GM12878 (cell line): ENCODE measurements at regions of chr9 and their contacts with region 1.

Region 1: DNA sequence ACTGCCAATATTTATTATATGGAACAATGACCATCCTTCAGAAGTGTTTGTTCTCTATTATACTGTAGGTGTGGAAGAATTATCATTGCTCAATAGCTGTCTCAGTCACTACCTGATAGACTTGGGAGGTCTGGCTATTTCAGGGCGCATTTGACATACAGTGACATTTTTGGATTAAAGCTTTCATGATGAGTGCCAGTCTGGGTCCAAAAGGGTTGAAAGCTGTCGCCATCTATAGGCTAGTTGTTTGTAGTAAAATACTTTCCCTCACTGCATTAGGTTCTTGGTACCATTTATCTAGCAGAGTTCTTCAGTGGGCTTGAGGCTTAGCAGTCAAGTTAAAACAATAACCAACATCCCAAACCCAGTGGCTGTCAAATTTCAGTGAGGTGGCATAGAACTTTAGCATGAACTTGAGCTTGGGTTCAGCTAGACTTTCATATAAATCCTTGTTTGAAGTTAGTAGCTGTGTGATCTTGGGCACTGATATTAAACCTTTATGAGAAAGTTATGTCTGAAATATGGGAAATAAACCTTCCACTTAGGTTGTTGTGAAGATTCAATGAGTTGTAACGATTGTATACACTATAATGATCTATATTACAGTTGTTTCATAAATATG is 110.5 kb upstream of the CDKN2B start:
- DNase-seq: no peak
- ATAC-seq: peak; percentile 76
- H3K4me3 ChIP-seq: no peak overlapping the region
- H3K27ac ChIP-seq: no peak overlapping the region
- H3K4me1 ChIP-seq: no peaks in the 10 kb centered on the region
- H3K27me3 ChIP-seq: peaks cover 0 to 8% of the 10 kb centered on the region in 2 experiments; a peak in 2 of 4 replicates
- CTCF ChIP-seq: peak; percentile 39 to 58 (median 55); a peak in 5 of 6 replicates
- EP300 ChIP-seq: no peak
- POLR2A ChIP-seq: no peak
- RAD21 ChIP-seq: peak; percentile 68

Region 2: GRCh38 chr9:21840647-21841046 is 279.0 kb before region 1 on chr9:
- CTCF ChIA-PET with region 1: no interaction called
- POLR2A ChIA-PET with region 1: no interaction called
- RAD21 ChIA-PET with region 1: no interaction called
- SMC1A ChIA-PET with region 1: no interaction called
- in situ Hi-C with region 1: no loop called
- intact Hi-C with region 1: no loop called
- DNase-seq: no peak
- ATAC-seq: no peak
- H3K4me3 ChIP-seq: no peak overlapping the region
- H3K27ac ChIP-seq: no peak overlapping the region
- H3K4me1 ChIP-seq: no peaks in the 10 kb centered on the region
- H3K27me3 ChIP-seq: no peaks in the 10 kb centered on the region
- CTCF ChIP-seq: no peak
- EP300 ChIP-seq: no peak
- POLR2A ChIP-seq: no peak
- RAD21 ChIP-seq: no peak

Region 3: GRCh38 chr9:22037954-22038690 is 81.5 kb before region 1 on chr9:
- CTCF ChIA-PET with region 1: interaction called, 13 read pairs
- POLR2A ChIA-PET with region 1: no interaction called
- RAD21 ChIA-PET with region 1: interaction called, 4 read pairs
- SMC1A ChIA-PET with region 1: interaction called, 7 read pairs
- in situ Hi-C with region 1: no loop called
- intact Hi-C with region 1: no loop called
- DNase-seq: no peak
- ATAC-seq: peak; percentile 53; the same call in 2 of the 3 replicates
- H3K4me3 ChIP-seq: no peak overlapping the region
- H3K27ac ChIP-seq: no peak overlapping the region
- H3K4me1 ChIP-seq: no peaks in the 10 kb centered on the region
- H3K27me3 ChIP-seq: no peaks in the 10 kb centered on the region; a peak in 1 of 4 replicates
- CTCF ChIP-seq: peak; percentile 30 to 48 (median 34); a peak in 4 of 6 replicates
- EP300 ChIP-seq: no peak
- POLR2A ChIP-seq: no peak
- RAD21 ChIP-seq: peak; percentile 76

Region 4: DNA sequence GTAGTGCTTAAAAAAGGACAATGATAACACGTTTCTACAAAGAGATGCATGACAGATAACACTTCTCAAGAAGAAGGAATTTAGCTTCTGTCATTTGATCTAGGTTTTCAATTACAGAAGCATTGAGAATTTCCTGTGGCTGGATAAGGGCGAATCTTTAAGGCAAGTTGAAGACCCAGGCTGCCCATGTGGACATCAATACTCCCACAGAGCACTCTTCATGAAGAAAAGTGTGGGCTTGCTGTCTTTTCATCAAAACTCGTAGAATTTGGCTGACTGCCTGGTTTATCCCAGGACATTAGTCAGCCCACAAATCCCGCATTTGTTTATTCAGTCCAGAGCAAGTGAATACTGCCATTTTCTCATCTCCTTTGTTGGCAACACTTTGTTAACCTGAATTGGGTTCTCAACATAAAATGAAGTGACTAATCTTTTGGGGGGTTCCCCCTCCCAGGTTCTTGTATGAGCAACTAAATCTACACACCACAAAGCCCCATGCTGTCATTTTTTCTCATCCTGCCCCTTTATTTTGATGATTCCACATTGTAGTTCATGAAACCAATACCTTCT is 67.2 kb before region 1 on chr9:
- CTCF ChIA-PET with region 1: interaction called, 8 read pairs
- POLR2A ChIA-PET with region 1: no interaction called
- RAD21 ChIA-PET with region 1: interaction called, 5 read pairs
- SMC1A ChIA-PET with region 1: interaction called, 10 read pairs
- in situ Hi-C with region 1: no loop called
- intact Hi-C with region 1: no loop called
- DNase-seq: no peak
- ATAC-seq: peak; percentile 42
- H3K4me3 ChIP-seq: no peak overlapping the region
- H3K27ac ChIP-seq: no peak overlapping the region
- H3K4me1 ChIP-seq: no peaks in the 10 kb centered on the region
- H3K27me3 ChIP-seq: no peaks in the 10 kb centered on the region
- CTCF ChIP-seq: no peak
- EP300 ChIP-seq: no peak
- POLR2A ChIP-seq: no peak
- RAD21 ChIP-seq: no peak

Region 5: DNA sequence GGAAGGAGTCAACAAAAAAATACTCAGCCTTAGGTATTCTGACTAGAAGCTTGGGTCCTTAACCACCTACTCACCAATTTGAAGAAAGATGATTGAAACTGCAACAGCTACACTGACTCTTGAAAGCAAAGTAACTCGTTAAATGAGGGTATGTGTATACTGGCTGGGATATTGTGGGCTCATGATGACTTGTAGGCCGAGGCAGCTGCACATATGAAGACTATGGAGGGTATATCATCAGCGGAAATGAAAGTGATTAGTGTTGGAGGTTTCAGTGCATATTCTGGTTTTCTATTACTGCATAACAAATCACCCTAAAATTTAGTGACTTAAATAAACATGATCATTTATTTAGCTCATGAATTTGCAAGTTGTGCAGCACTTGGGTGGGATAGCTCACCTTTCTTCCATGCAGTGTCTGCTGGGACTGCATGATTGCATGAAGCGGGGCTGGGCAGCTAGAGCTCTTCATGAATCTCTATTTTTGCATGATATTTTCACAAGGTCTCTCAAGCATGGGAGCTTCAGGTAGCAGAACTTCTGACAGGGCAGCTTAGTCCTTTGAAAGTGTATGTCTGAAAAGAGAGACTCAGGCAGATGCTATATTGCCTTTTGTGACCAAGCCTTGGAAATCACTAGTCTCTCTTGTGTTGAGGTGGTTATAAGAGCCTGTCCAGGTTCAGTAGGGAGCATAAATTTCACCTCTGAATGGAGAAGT is 14.5 kb before region 1 on chr9:
- CTCF ChIA-PET with region 1: interaction called, 25 read pairs
- POLR2A ChIA-PET with region 1: no interaction called
- RAD21 ChIA-PET with region 1: interaction called, 3 read pairs
- SMC1A ChIA-PET with region 1: interaction called, 3 read pairs
- in situ Hi-C with region 1: no loop called
- intact Hi-C with region 1: no loop called
- DNase-seq: peak; percentile 40
- ATAC-seq: peak; percentile 93
- H3K4me3 ChIP-seq: no peak overlapping the region
- H3K27ac ChIP-seq: no peak overlapping the region
- H3K4me1 ChIP-seq: peaks cover 9% of the 10 kb centered on the region
- H3K27me3 ChIP-seq: peaks cover 0 to 8% of the 10 kb centered on the region in 2 experiments; a peak in 2 of 4 replicates
- CTCF ChIP-seq: no peak
- EP300 ChIP-seq: no peak
- POLR2A ChIP-seq: no peak
- RAD21 ChIP-seq: no peak

Region 6: GRCh38 chr9:22169727-22170503 is 50.3 kb after region 1 on chr9:
- CTCF ChIA-PET with region 1: no interaction called
- POLR2A ChIA-PET with region 1: no interaction called
- RAD21 ChIA-PET with region 1: no interaction called
- SMC1A ChIA-PET with region 1: no interaction called
- in situ Hi-C with region 1: no loop called
- intact Hi-C with region 1: no loop called
- DNase-seq: no peak
- ATAC-seq: no peak
- H3K4me3 ChIP-seq: no peak overlapping the region
- H3K27ac ChIP-seq: no peak overlapping the region
- H3K4me1 ChIP-seq: peaks cover 3% of the 10 kb centered on the region; the same call in 1 of the 2 replicates
- H3K27me3 ChIP-seq: no peaks in the 10 kb centered on the region
- CTCF ChIP-seq: no peak
- EP300 ChIP-seq: no peak
- POLR2A ChIP-seq: no peak
- RAD21 ChIP-seq: no peak